BJ (cell line): ENCODE measurements at regions of chr15 and their contacts with region 1.

Region 1: GRCh38 chr15:48717458-48717857 is 71.9 kb upstream of the FBN1 start:
- DNase-seq: no peak
- H3K4me3 ChIP-seq: no peak overlapping the region
- H3K27me3 ChIP-seq: no peaks in the 10 kb centered on the region
- CTCF ChIP-seq: peak; percentile 28; the same call in 1 of the 2 replicates

Region 2: GRCh38 chr15:48402427-48403177 is 314.9 kb before region 1 on chr15:
- CTCF ChIA-PET with region 1: no interaction called
- POLR2A ChIA-PET with region 1: no interaction called
- DNase-seq: no peak
- H3K4me3 ChIP-seq: no peak overlapping the region
- H3K27me3 ChIP-seq: no peaks in the 10 kb centered on the region
- CTCF ChIP-seq: no peak

Region 3: DNA sequence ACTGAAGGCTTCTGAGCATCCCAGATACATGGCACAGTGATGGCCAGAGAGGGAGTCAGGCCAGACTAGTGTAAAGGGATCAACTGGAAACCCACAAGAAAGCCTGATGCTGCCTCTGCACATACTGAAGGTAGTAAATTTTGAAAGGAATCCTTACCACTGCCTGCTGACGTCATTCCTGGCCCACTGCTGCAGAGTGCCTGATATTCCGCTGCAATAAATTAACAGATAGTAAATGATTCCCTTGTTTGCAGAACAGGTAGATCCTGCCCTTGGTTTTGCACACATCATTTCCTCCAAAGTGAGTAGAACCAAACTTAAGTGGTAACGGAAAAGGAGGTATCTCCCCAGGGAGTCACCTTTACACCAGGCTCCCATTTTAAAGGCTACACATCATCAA is 218.6 kb before region 1 on chr15:
- CTCF ChIA-PET with region 1: no interaction called
- POLR2A ChIA-PET with region 1: interaction called, 11 read pairs
- DNase-seq: no peak
- H3K4me3 ChIP-seq: no peak overlapping the region
- H3K27me3 ChIP-seq: no peaks in the 10 kb centered on the region
- CTCF ChIP-seq: no peak

Region 4: DNA sequence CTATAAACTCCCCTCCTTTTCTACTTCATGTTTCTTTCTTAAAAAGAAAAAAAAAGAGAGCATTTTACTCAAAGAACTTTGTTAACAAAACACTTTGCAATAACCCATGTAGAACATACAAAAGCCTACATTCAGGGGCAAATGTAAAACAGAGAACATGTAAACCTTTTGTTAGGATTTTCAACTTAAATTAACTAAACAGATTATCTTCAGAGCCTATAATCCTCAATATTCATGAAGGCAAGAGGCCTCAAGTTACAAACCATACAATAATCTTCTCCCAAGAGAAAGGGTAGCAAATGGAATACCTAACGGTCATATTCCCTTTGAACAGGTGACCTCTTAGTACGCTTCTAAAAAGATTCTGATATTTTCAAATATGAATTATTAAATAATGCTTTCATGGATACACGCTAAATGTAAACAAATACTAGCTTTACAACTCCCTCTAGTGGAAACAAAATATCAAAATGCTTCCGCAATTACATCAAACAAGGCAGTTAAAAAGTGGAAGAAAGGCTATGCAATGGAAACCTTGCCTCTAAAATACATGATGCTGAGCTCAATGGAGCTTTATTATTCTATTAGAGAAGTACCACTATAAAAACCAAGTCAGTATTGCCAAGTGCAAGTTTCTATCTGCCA is 83.5 kb after region 1 on chr15:
- CTCF ChIA-PET with region 1: interaction called, 20 read pairs
- POLR2A ChIA-PET with region 1: interaction called, 3 read pairs
- DNase-seq: no peak
- H3K4me3 ChIP-seq: no peak overlapping the region
- H3K27me3 ChIP-seq: no peaks in the 10 kb centered on the region
- CTCF ChIP-seq: peak; percentile 45